ENCODE measurements at regions of chr1 and their contacts with region 1.

Region 1: DNA sequence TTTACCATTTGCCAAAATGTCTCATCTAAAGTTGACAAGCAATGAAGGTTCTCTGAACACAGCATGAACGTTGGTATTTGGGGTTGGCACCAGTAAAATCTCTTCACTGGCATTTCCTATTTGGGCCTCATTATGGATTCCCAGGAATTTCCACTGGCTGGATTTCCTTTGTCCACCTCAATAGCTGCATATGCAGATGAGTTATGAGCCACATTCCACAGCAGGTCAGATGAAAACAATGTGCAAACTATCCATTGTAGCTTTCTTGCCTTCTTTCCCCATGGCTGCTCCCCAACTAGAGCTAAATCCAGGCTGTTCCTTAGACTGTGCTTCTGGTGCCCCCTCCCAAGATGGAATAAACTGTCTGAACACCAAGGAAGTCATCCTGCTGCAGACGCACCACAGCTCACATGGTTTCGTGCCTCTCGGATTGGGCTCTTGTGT is 168.1 kb upstream of the FGGY start:
- DNase-seq: no peak
- H3K4me3 ChIP-seq: no peak overlapping the region
- H3K27ac ChIP-seq: no peak overlapping the region
- H3K4me1 ChIP-seq: peaks cover 24% of the 10 kb centered on the region
- H3K27me3 ChIP-seq: no peaks in the 10 kb centered on the region
- CTCF ChIP-seq: no peak

Region 2: GRCh38 chr1:59100708-59101374 is 28.0 kb before region 1 on chr1:
- CTCF ChIA-PET with region 1: no interaction called
- dilution Hi-C with region 1: no loop called
- in situ Hi-C with region 1: no loop called
- intact Hi-C with region 1: loop called (anchors 1 kb)
- DNase-seq: no peak
- H3K4me3 ChIP-seq: no peak overlapping the region
- H3K27ac ChIP-seq: no peak overlapping the region
- H3K4me1 ChIP-seq: no peaks in the 10 kb centered on the region
- H3K27me3 ChIP-seq: no peaks in the 10 kb centered on the region
- CTCF ChIP-seq: no peak

Region 3: GRCh38 chr1:59580257-59580656 is 451.5 kb after region 1 on chr1:
- CTCF ChIA-PET with region 1: no interaction called
- dilution Hi-C with region 1: no loop called
- in situ Hi-C with region 1: no loop called
- intact Hi-C with region 1: no loop called
- DNase-seq: no peak
- H3K4me3 ChIP-seq: no peak overlapping the region
- H3K27ac ChIP-seq: no peak overlapping the region
- H3K4me1 ChIP-seq: no peaks in the 10 kb centered on the region
- H3K27me3 ChIP-seq: no peaks in the 10 kb centered on the region
- CTCF ChIP-seq: no peak

Measured in mammary epithelial cell (primary cell).